ENCODE measurements at regions of chr7 and their contacts with region 1.

Region 1: DNA sequence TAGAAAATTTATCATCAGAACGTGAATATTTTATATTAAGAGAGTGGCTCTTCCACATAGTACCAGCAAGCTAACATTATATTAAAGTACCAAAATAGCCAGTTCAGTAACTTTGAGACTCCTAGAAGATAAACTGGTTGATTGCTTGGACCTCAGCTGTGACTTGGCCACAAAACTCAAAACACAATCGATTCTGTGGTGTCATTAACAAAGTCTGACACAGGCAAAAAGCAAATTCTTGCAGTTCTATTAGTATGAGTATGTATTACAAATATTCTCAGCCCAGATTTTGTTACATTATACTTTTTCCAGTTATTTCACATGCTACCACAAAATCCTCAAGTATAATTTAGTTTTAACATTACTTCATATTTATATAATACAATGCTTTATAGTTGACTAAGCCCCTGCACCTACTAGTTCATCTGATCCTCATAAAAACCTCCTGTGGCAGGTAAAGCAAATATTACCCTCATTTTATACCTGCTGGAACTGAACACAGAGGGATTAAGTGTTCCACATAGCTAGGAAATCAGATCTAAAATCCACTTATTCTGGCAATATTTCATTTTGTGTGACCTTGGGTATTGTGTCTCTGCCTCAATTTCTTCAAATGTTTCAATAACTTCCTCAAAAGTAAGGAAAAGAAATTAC is 279.9 kb upstream of the MKLN1 start:
- DNase-seq: no peak
- H3K4me3 ChIP-seq: no peak overlapping the region
- H3K27ac ChIP-seq: no peak overlapping the region
- H3K4me1 ChIP-seq: no peaks in the 10 kb centered on the region
- H3K27me3 ChIP-seq: no peaks in the 10 kb centered on the region
- CTCF ChIP-seq: no peak
- POLR2A ChIP-seq: no peak

Region 2: GRCh38 chr7:131288450-131288849 is 240.7 kb after region 1 on chr7:
- intact Hi-C with region 1: loop called (anchors 2 kb)
- DNase-seq: no peak
- H3K4me3 ChIP-seq: no peak overlapping the region
- H3K27ac ChIP-seq: no peak overlapping the region
- H3K4me1 ChIP-seq: no peaks in the 10 kb centered on the region
- H3K27me3 ChIP-seq: no peaks in the 10 kb centered on the region
- CTCF ChIP-seq: no peak
- POLR2A ChIP-seq: no peak